ENCODE measurements at regions of chr11 and their contacts with region 1.

Region 1: GRCh38 chr11:76152086-76152681 is 54.1 kb downstream of the WNT11 start:
- DNase-seq: peak; percentile 68 to 95 (median 85)
- ATAC-seq: peak; percentile 99
- H3K4me3 ChIP-seq: no peak overlapping the region
- H3K27ac ChIP-seq: no peak overlapping the region
- H3K4me1 ChIP-seq: peaks cover 0 to 18% of the 10 kb centered on the region in 2 donors
- H3K27me3 ChIP-seq: no peaks in the 10 kb centered on the region
- CTCF ChIP-seq: peak; percentile 91

Region 2: DNA sequence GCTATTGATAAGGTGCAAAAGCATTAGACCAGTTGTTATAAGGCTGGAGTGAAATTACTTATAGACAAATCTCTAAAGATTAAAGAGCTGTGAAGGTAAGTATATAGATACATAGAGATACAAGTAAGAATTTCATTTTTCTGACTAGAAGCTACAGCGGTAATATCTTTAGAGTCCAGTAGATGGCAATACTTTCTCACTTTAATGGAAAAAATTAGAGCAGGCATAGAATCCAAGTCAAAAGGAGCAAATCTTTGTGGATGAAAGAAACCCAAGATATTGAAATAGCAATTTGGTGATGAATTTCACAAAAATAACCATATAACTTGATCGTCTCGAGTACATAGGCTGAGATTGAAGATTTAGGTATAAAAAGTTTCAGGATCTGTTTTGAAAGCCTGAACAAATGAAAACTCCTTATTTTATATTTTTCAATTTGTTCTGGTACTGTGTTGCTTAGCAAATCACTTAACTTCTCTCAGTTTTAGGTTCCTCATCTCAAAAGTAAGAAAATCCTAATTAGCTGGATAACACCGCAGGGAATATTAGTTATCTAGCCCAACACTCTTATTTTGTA is 255.3 kb before region 1 on chr11:
- intact Hi-C with region 1: loop called in 1 of 2 experiments (anchors 5 kb)
- DNase-seq: peak in 2 of 4 donors; percentile 39 to 59
- ATAC-seq: peak; percentile 72
- H3K4me3 ChIP-seq: no peak overlapping the region
- H3K27ac ChIP-seq: no peak overlapping the region
- H3K4me1 ChIP-seq: peaks cover 0 to 27% of the 10 kb centered on the region in 2 donors
- H3K27me3 ChIP-seq: no peaks in the 10 kb centered on the region
- CTCF ChIP-seq: peak; percentile 49 to 65